GM18951 (cell line): ENCODE measurements at regions of chr3 and their contacts with region 1.

Region 1: DNA sequence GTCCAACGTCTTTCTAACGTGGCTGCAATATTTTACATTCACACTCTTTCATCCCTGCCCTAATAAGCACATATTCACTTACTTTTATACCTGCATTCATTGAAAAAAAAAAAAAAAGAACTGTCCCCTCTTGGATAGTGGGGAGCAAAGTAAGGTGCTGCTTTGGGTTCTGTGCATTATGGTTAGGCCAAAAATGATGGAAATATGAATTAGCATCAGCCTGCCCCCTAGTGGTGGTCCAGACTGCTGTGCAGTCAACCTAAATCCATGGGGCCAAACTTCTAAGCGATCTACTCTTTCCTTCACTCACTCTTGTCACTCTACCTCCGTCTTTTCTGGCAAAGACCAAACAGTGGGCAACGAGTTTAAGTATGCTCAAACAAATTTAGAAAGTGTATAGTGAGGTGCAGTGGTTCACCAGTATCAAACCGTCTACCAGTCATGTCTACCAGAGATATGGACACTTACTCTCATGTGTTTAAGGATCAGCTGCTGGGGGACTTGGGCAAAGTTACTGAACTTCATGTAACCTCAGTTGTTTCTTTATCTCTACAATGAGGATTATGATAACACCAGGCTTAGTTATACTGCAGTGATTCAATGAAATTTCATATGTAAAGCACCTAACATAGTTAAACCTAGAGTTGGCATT is 61.5 kb upstream of the GRM7 start:
- POLR2A ChIP-seq: no peak

Region 2: DNA sequence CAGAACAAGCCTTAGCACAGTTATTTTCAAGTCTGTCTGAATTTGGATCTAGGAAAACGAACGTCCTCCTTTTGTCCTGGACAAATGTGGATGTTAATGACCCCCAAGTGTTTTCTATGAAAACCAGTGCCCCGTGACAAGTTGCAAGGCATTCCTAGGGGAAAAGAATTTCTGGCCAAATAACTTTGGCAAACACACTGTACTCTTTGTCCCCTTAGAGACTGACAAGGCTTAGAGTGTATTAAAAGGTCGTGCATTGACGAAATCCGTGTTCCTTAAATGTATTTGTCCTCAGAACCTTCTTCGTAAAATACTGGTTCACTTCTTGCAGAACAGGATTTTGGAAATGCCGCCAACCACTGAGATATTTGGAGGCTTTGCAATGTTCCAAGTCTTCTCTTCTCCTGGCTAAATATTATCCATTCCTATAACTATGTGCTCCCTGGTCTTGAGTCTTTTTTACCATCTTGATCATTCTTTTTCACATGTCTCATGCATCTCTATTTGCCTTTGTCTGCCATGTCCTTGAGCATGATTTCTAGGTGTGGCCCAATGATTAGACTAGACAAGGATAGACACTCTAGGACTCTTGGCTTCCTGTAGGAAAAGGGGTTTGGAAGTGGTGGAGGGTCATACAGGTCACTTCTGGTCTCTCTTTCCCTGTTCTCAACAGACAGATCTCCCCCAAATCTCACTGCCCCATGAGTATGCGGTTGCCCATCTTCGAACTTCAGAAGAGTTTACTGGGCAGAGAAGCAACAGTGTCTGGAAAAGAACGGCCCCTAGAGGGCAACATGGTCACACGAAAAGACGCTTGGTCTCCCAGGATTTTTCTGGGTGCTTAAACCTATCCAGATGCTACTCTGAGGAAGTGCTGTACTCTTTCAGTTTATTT is 1494.4 kb before region 1 on chr3:
- in situ Hi-C with region 1: loop called (anchors 10 kb)
- POLR2A ChIP-seq: no peak

Region 3: DNA sequence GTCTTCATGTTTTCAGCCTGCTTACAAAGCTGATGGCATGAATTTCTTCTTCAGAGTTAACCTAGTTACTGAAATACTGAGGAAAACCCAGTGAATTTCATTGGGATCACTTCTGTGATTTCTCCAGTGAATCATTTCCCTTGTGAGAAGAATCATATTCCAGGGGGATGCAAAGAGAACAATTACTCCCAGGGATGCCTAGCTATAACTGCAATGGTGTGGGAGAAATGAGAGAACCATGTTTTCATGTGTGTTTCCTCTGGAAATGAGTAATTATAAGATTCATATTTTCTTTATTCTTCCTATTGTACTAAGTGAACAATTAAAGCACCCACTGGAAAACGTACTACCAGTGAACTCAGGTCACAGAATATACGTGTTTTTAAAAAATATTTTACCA is 547.0 kb after region 1 on chr3:
- in situ Hi-C with region 1: no loop called
- POLR2A ChIP-seq: no peak